H1 (cell line): ENCODE measurements at regions of chr1 and their contacts with region 1.

Region 1: GRCh38 chr1:119367427-119368124 is 1.0 kb upstream of the HAO2 start:
- DNase-seq: no peak
- H3K4me3 ChIP-seq: no peak overlapping the region
- H3K27ac ChIP-seq: no peak overlapping the region
- H3K4me1 ChIP-seq: peaks cover 0 to 3% (median 2%) of the 10 kb centered on the region in 4 experiments; a peak in 3 of 7 replicates
- H3K27me3 ChIP-seq: no peaks in the 10 kb centered on the region; a peak in 1 of 7 replicates
- CTCF ChIP-seq: peak in 2 of 3 experiments; percentile 83 to 96; a peak in 3 of 4 replicates
- EP300 ChIP-seq: no peak
- POLR2A ChIP-seq: no peak
- RAD21 ChIP-seq: peak; percentile 100

Region 2: DNA sequence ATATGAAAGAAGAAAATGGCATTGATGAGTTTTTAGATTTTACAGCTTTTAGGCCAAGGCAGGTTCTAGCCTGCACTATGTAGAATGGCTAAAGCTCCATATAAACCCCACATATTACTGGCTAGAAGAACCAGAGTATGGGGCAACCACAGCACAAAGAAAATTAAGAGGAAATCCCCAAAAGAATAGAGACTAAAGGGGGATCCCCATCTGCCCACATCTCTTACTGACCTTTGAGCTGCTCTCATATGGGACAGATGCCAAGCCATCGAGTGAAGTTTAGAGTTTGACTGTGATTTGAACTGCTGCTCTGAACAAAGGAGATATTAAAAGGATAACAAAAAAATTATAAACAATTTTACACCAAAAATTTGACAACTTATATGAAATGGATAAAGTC is 101.2 kb before region 1 on chr1:
- CTCF ChIA-PET with region 1: interaction called, 368 read pairs
- POLR2A ChIA-PET with region 1: no interaction called
- DNase-seq: no peak
- H3K4me3 ChIP-seq: no peak overlapping the region
- H3K27ac ChIP-seq: no peak overlapping the region
- H3K4me1 ChIP-seq: no peaks in the 10 kb centered on the region
- H3K27me3 ChIP-seq: no peaks in the 10 kb centered on the region
- CTCF ChIP-seq: no peak
- EP300 ChIP-seq: no peak
- POLR2A ChIP-seq: no peak
- RAD21 ChIP-seq: no peak

Region 3: DNA sequence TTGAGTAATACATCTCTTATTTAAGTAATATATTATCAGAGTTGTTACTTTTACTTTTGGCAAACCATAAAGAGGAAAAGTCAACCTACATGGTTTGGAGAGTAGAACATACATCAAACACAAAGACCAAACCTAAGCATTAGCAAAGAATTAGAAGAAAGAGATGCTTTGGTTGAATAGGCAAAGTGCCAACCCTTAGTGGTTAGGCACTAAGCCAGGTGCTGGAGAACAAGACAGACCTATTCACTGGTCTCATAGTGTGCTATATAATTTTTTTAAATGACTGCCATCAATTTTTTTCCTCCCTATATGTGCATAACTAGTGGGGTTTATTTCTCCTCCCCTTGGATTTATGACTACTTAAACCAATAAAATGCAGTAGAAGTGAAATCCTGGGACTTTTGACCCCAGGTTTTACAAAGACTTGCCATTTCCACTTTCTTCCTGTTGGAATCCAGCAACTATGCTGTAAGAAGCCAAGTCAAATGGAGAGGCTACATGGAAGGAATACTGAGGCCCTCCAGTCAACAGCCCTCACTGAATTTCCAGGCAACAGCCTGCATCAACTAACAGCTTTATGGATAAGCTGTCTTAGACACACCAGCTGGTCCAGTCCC is 68.8 kb before region 1 on chr1:
- CTCF ChIA-PET with region 1: interaction called, 368 read pairs
- POLR2A ChIA-PET with region 1: no interaction called
- DNase-seq: no peak
- H3K4me3 ChIP-seq: no peak overlapping the region
- H3K27ac ChIP-seq: no peak overlapping the region
- H3K4me1 ChIP-seq: peaks cover 2 to 10% (median 6%) of the 10 kb centered on the region in 4 experiments; a peak in 6 of 7 replicates
- H3K27me3 ChIP-seq: peaks cover 0 to 2% (median 0%) of the 10 kb centered on the region in 4 experiments; a peak in 1 of 7 replicates
- CTCF ChIP-seq: no peak
- EP300 ChIP-seq: no peak
- POLR2A ChIP-seq: no peak
- RAD21 ChIP-seq: no peak

Region 4: DNA sequence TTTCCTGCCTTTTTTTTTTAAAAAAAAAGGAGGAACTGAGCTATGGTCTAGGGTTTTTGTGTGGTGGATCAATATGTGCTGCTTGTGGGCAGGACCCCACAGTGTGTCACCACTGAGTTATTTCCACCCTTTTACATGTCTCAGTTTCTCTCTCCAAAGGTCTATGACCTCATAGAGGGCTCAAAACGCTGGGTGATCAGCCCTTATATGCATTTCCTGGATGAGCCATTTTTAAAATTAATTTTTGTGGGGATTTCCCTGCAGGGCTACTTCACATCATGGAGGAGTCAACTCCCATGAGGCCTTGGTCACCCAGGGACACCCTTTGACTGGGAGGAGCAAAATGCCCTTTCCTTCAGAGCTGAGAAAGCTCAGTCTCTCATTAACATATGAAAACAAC is 19.7 kb before region 1 on chr1:
- CTCF ChIA-PET with region 1: interaction called, 22 read pairs
- POLR2A ChIA-PET with region 1: no interaction called
- DNase-seq: no peak
- H3K4me3 ChIP-seq: no peak overlapping the region
- H3K27ac ChIP-seq: no peak overlapping the region
- H3K4me1 ChIP-seq: peaks cover 0 to 4% (median 2%) of the 10 kb centered on the region in 4 experiments; a peak in 2 of 7 replicates
- H3K27me3 ChIP-seq: no peaks in the 10 kb centered on the region
- CTCF ChIP-seq: no peak
- EP300 ChIP-seq: no peak
- POLR2A ChIP-seq: no peak
- RAD21 ChIP-seq: no peak

Region 5: GRCh38 chr1:119428991-119429390 is 61.4 kb after region 1 on chr1:
- CTCF ChIA-PET with region 1: no interaction called
- POLR2A ChIA-PET with region 1: no interaction called
- DNase-seq: no peak
- H3K4me3 ChIP-seq: no peak overlapping the region
- H3K27ac ChIP-seq: no peak overlapping the region
- H3K4me1 ChIP-seq: no peaks in the 10 kb centered on the region; a peak in 1 of 7 replicates
- H3K27me3 ChIP-seq: no peaks in the 10 kb centered on the region
- CTCF ChIP-seq: no peak
- EP300 ChIP-seq: no peak
- POLR2A ChIP-seq: no peak
- RAD21 ChIP-seq: no peak